ENCODE measurements at regions of chr6 and their contacts with region 1.

Region 1: GRCh38 chr6:43608310-43608763 is 20.7 kb downstream of the GTPBP2 start:
- DNase-seq: peak; percentile 73
- H3K4me3 ChIP-seq: no peak overlapping the region
- H3K27ac ChIP-seq: no peak overlapping the region
- H3K4me1 ChIP-seq: no peaks in the 10 kb centered on the region
- H3K27me3 ChIP-seq: no peaks in the 10 kb centered on the region
- CTCF ChIP-seq: peak; percentile 82

Region 2: GRCh38 chr6:43421831-43422230 is 186.5 kb before region 1 on chr6:
- intact Hi-C with region 1: no loop called
- DNase-seq: no peak
- H3K4me3 ChIP-seq: no peak overlapping the region
- H3K27ac ChIP-seq: no peak overlapping the region
- H3K4me1 ChIP-seq: no peaks in the 10 kb centered on the region
- H3K27me3 ChIP-seq: no peaks in the 10 kb centered on the region
- CTCF ChIP-seq: no peak

Region 3: GRCh38 chr6:43723737-43724295 is 115.5 kb after region 1 on chr6:
- intact Hi-C with region 1: no loop called
- DNase-seq: peak; percentile 92
- H3K4me3 ChIP-seq: no peak overlapping the region
- H3K27ac ChIP-seq: no peak overlapping the region
- H3K4me1 ChIP-seq: peaks cover 9% of the 10 kb centered on the region
- H3K27me3 ChIP-seq: no peaks in the 10 kb centered on the region
- CTCF ChIP-seq: peak; percentile 68

Region 4: DNA sequence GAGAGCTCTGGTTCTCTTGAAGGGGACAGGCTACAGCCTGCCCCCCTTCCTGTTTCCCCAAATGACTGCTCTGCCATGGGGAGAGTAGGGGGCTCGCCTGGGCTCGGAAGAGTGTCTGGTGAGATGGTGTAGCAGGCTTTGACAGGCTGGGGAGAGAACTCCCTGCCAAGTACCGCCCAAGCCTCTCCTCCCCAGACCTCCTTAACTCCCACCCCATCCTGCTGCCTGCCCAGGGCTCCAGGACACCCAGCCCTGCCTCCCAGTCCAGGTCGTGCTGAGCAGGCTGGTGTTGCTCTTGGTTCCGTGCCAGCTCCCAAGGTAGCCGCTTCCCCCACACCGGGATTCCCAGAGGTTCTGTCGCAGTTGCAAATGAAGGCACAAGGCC is 171.5 kb after region 1 on chr6:
- intact Hi-C with region 1: no loop called
- DNase-seq: no peak
- H3K4me3 ChIP-seq: no peak overlapping the region
- H3K27ac ChIP-seq: no peak overlapping the region
- H3K4me1 ChIP-seq: peaks cover 5% of the 10 kb centered on the region
- H3K27me3 ChIP-seq: no peaks in the 10 kb centered on the region
- CTCF ChIP-seq: no peak

Region 5: GRCh38 chr6:43817192-43817591 is 208.9 kb after region 1 on chr6:
- intact Hi-C with region 1: no loop called
- DNase-seq: peak; percentile 51
- H3K4me3 ChIP-seq: no peak overlapping the region
- H3K27ac ChIP-seq: no peak overlapping the region
- H3K4me1 ChIP-seq: peaks cover 14% of the 10 kb centered on the region
- H3K27me3 ChIP-seq: no peaks in the 10 kb centered on the region
- CTCF ChIP-seq: no peak

Region 6: DNA sequence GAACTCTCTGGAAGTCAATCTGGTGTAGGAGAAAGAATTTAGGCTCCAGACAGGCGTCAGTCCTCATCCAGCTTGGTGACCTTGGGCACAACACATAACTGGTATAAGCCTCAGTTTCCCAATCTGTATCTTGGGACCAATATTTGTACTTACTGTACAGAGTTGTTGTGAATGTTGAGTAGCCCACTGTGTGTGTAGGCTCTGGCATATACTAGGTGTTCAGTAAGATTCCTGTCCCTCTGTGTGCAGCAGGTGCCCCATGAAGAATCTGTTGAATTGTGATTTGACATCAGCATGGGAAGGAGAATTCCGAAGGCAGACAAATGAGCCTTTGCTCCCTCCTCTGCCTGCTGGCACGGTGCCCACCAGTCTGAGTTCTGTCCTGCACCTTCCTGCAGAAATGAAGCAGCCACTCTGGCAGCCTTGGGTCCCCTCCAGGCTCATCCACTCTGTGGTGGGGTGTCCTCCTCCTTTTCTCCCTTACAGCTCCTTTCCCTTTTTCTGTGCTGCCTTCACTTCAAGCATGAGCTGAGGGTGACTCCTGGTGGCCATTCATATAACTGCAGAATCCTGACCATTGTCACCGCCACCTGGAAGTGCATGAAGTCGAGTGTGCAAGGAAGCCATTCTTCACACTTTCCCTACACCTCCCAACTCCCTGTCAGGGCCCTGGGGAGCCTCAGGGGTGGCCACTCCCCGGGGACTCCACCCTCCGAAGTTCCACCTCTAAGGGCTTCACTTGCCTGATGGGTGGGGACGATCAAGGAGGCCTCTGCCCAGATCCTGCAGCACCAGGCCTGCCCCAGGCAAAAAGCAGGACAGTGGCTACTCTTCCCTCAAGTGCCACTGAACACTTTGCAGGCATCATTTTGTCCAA is 470.7 kb after region 1 on chr6:
- intact Hi-C with region 1: loop called (anchors 2 kb)
- DNase-seq: peak; percentile 89
- H3K4me3 ChIP-seq: no peak overlapping the region
- H3K27ac ChIP-seq: no peak overlapping the region
- H3K4me1 ChIP-seq: peaks cover 15% of the 10 kb centered on the region
- H3K27me3 ChIP-seq: no peaks in the 10 kb centered on the region
- CTCF ChIP-seq: peak; percentile 87

Measured in colonic mucosa (tissue), 4 donors.